ENCODE measurements at regions of chr2 and their contacts with region 1.

Region 1: DNA sequence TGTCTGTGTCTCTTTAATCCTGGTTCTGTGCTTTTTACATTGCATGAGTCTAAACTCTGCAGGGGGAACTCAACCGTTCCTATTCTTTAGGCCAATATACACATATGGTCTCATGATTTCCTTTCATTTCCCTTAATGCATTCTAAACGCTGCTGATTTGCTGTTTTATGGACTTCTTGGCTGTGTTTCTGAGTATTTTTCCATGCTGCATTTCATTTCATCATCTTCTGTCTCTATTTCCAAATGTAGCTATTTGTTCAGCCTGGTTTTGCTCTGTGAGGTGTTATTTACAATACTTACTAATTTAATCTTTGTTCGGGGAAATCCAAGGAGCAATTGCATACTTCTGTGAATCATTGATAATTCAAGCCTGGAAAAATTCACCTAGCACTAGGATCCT is 897.2 kb downstream of the TSN start:
- DNase-seq: no peak
- ATAC-seq: peak; percentile 37; the same call in 1 of the 3 replicates
- H3K4me3 ChIP-seq: no peak overlapping the region
- H3K27ac ChIP-seq: no peak overlapping the region
- H3K4me1 ChIP-seq: no peaks in the 10 kb centered on the region
- H3K27me3 ChIP-seq: no peaks in the 10 kb centered on the region
- CTCF ChIP-seq: no peak
- EP300 ChIP-seq: no peak
- POLR2A ChIP-seq: no peak
- RAD21 ChIP-seq: no peak

Region 2: DNA sequence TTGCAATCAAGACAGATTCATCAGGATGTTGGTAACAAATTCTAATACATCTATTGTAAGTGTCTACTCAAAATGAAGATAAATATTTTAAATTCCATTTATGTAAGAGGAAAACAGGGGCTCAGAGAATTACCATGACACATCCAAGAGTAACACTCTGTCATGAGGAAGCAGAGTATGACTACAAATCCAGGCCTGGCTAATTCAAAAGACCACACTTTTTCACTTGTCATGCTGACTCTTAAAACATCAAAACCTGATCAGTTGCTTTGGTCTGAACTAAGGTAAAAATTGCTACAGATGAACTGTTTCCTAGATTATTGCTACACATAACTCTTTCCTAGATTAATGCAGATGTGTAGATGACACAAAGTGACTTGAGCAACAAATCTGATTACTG is 16.6 kb before region 1 on chr2:
- CTCF ChIA-PET with region 1: interaction called, 6 read pairs
- POLR2A ChIA-PET with region 1: interaction called, 3 read pairs
- RAD21 ChIA-PET with region 1: interaction called, 4 read pairs
- SMC1A ChIA-PET with region 1: interaction called, 12 read pairs
- in situ Hi-C with region 1: no loop called
- intact Hi-C with region 1: no loop called
- DNase-seq: no peak
- ATAC-seq: peak; percentile 69
- H3K4me3 ChIP-seq: no peak overlapping the region
- H3K27ac ChIP-seq: no peak overlapping the region
- H3K4me1 ChIP-seq: no peaks in the 10 kb centered on the region
- H3K27me3 ChIP-seq: no peaks in the 10 kb centered on the region
- CTCF ChIP-seq: no peak
- EP300 ChIP-seq: no peak
- POLR2A ChIP-seq: no peak
- RAD21 ChIP-seq: no peak

Region 3: DNA sequence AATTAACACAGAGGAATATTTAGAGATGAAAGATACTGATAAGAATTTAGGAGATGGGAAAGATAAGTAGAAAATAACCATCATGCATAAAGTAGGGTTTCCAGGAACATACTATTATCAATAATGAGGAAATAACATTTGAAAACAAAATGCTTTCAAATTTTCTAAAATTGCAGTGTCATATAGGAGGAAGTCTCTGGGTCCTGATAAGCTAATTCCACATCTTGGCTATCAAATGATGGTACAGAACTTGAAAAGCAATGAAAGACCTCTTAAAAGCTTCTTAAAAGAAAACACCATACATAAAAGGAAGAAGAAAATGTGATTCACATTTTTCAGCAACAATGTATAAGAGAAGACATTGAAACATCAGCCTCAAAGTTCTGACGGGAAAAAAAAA is 127.6 kb after region 1 on chr2:
- CTCF ChIA-PET with region 1: no interaction called
- POLR2A ChIA-PET with region 1: no interaction called
- RAD21 ChIA-PET with region 1: no interaction called
- SMC1A ChIA-PET with region 1: no interaction called
- in situ Hi-C with region 1: no loop called
- intact Hi-C with region 1: no loop called
- DNase-seq: no peak
- ATAC-seq: no peak
- H3K4me3 ChIP-seq: no peak overlapping the region
- H3K27ac ChIP-seq: no peak overlapping the region
- H3K4me1 ChIP-seq: no peaks in the 10 kb centered on the region
- H3K27me3 ChIP-seq: no peaks in the 10 kb centered on the region
- CTCF ChIP-seq: no peak
- EP300 ChIP-seq: no peak
- POLR2A ChIP-seq: no peak
- RAD21 ChIP-seq: no peak